Pancreas (tissue), 10 donors: ENCODE measurements at regions of chr16 and their contacts with region 1.

Region 1: DNA sequence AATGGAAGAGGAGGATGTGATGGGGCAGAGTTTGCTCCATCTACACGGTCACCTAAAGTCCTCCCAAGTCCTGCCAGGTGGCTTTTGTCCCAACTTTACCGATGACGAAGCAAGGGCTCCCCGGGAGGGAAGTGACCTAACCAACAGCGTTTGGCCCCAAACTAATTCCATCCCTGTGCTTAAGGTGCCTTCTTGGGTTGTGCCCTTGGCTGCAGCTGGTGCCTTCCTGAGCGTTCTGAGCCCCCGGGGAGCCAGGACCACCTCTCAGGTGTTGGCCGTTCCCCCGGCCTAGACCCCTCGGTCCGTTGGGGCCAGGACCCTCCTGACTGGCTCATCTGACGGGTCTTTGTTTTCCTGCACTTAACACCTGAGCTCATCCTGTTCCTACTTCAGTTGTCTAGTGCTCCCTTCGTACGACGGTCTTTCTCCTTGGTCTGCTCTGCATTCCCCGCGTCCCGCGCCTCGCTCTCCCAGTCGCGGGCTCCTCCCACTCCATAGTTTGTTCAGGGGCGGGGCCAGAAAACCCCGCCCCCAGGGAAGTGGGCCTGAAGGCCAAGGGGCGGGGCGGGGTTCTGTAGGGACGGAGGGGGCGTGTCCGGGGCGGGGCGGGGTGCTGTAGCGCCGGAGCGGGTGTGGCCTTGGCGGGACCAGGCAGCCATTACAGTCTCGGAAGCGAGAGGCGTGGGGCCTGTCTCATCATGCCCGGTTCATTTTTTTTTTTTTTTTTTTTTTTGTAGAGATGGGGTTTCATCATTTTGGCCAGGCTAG is 822 bp upstream of the ZSCAN10 start:
- DNase-seq: peak; percentile 86 to 95 (median 94)
- ATAC-seq: peak; percentile 95 to 98 (median 97)
- H3K4me3 ChIP-seq: peak overlapping the region in 1 of 4 donors; percentile 36
- H3K27ac ChIP-seq: no peak overlapping the region
- H3K4me1 ChIP-seq: peaks cover 0 to 7% (median 0%) of the 10 kb centered on the region in 3 donors
- H3K27me3 ChIP-seq: no peaks in the 10 kb centered on the region
- CTCF ChIP-seq: no peak

Region 2: GRCh38 chr16:2829501-2830356 is 270.2 kb before region 1 on chr16 and contains the start of gene ZG16B:
- intact Hi-C with region 1: no loop called
- DNase-seq: peak in 1 of 6 donors; percentile 54
- ATAC-seq: peak in 2 of 4 donors; percentile 17 to 73
- H3K4me3 ChIP-seq: no peak within 1 kb of the TSS
- H3K27ac ChIP-seq: no peak within 1 kb of the TSS
- H3K4me1 ChIP-seq: no peaks in the 10 kb centered on the region
- H3K27me3 ChIP-seq: no peaks in the 10 kb centered on the region
- CTCF ChIP-seq: no peak
- total RNA-seq, gene ZG16B: 0.43 to 1.5 (median 0.80) TPM

Region 3: DNA sequence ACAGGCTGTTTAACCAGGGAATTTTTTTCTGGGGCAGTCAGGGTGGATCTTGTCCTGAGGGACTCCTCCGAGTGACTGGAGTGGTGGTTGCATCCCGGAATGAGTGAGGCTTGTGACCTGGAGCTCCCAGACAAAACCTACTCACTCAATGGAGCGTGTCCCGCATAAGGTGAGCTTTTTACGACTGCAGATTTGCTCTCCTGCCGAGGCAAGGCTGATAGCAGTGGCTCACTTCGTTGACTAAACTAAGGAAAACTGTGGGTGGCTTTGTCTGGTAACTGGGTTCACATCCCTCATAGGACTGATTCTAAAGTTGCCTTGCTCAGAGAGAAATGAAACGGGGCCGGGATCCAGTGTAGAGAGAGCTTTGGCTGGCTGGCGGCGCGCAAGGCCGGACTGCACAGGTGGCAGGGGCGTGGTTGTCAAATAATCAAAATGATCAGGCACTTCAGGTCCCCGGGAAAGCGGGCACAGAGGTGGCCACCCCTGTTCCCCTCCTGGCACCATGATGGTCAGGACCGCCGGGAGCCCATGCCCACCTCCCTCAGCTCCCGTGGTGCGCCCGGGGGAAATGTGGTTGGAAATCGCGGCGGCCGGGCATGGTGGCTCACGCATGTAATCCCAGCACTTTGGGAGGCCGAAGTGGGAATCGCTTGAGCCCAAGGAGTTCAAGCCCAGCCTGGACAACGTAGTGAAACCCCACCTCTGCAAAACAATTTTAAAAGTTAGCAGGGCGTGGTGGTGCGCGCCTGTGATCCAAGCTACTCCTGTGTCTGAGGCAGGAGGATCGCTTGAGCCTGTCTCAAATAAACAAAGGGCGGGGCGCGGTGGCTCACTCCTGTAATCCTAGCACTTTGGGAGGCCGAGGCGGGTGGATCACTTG is 61.5 kb after region 1 on chr16:
- intact Hi-C with region 1: loop called in 1 of 3 experiments (anchors 10 kb)
- DNase-seq: peak in 1 of 6 donors; percentile 59
- ATAC-seq: no peak
- H3K4me3 ChIP-seq: no peak overlapping the region
- H3K27ac ChIP-seq: no peak overlapping the region
- H3K4me1 ChIP-seq: no peaks in the 10 kb centered on the region
- H3K27me3 ChIP-seq: no peaks in the 10 kb centered on the region
- CTCF ChIP-seq: no peak